IMR-90 (cell line): ENCODE measurements at regions of chr11 and their contacts with region 1.

Region 1: DNA sequence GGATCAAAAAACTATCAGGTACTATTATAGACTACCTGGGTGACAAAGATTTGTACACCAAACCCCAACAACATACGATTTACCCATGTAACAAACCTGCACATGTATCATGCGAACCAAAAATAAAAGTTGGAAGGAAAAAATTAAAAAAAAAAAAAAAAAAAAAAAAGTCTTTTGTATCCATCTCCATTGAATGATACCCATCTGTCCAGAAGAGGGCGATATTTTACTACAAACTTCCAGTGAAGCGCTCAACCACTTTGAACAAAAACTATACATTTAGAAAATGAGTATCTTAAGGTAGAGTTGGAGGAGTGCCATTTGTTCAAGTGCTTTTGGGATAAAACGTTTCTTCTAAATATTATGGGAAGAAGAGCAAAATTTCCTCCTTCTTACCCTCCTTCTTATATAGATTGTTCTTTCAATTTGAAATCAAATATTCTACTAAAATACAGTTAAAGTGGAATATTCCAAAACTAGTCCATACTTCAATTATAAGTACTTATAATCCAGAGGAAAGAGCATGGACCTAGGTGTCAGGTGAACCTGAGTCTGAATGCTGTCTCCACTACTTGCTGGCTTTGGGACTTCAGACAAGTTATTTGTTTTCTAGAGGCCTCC is 23.3 kb downstream of the ARL14EP start:
- DNase-seq: peak; percentile 62
- ATAC-seq: peak; percentile 63
- H3K4me3 ChIP-seq: no peak overlapping the region
- H3K27ac ChIP-seq: no peak overlapping the region
- H3K4me1 ChIP-seq: no peaks in the 10 kb centered on the region
- H3K27me3 ChIP-seq: peaks cover 2% of the 10 kb centered on the region; the same call in 1 of the 2 replicates
- CTCF ChIP-seq: peak; percentile 76
- POLR2A ChIP-seq: no peak
- RAD21 ChIP-seq: peak; percentile 68

Region 2: GRCh38 chr11:30653606-30654005 is 307.4 kb after region 1 on chr11:
- CTCF ChIA-PET with region 1: no interaction called
- POLR2A ChIA-PET with region 1: no interaction called
- dilution Hi-C with region 1: no loop called
- in situ Hi-C with region 1: no loop called
- intact Hi-C with region 1: loop called (anchors 2 kb)
- DNase-seq: no peak
- ATAC-seq: no peak
- H3K4me3 ChIP-seq: no peak overlapping the region
- H3K27ac ChIP-seq: no peak overlapping the region
- H3K4me1 ChIP-seq: no peaks in the 10 kb centered on the region
- H3K27me3 ChIP-seq: no peaks in the 10 kb centered on the region
- CTCF ChIP-seq: no peak
- POLR2A ChIP-seq: no peak
- RAD21 ChIP-seq: no peak

Region 3: GRCh38 chr11:30855383-30856006 is 509.3 kb after region 1 on chr11:
- CTCF ChIA-PET with region 1: interaction called, 6 read pairs
- POLR2A ChIA-PET with region 1: interaction called, 3 read pairs
- dilution Hi-C with region 1: no loop called
- in situ Hi-C with region 1: no loop called
- intact Hi-C with region 1: loop called (anchors 1 kb)
- DNase-seq: peak; percentile 29
- ATAC-seq: peak; percentile 56
- H3K4me3 ChIP-seq: no peak overlapping the region
- H3K27ac ChIP-seq: no peak overlapping the region
- H3K4me1 ChIP-seq: no peaks in the 10 kb centered on the region
- H3K27me3 ChIP-seq: no peaks in the 10 kb centered on the region
- CTCF ChIP-seq: peak; percentile 48
- POLR2A ChIP-seq: no peak
- RAD21 ChIP-seq: peak; percentile 56

Region 4: DNA sequence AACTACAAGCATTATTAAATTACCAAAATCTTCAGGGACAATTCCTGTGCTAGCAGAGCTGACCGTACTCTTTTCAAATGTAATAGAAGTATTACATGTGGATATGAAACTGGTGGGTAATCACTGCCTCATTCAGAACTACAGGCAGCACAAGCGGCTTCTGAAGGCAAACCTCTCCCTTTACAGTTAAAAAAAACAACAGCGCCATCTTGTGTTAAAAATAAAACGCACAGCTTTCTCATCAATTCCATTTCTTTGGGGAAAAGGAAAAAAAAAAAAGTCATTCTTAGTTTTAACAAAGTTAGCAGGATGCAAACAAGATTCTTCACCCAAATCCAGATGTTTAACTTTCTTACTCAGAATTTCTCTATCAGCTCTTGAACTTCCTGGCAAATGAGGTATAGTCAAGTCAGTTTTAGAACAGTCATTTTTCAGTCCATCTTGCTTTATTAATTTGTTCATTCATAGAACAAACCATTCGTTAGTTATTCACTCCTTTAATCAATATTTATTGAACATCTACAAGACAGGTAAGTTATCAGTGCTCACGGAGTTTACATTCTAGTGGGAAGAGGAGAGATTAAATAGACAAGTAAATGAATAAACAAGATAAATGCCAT is 571.8 kb after region 1 on chr11:
- CTCF ChIA-PET with region 1: interaction called, 4 read pairs
- POLR2A ChIA-PET with region 1: no interaction called
- dilution Hi-C with region 1: no loop called
- in situ Hi-C with region 1: loop called (anchors 10 kb)
- intact Hi-C with region 1: loop called (anchors 1 kb)
- DNase-seq: peak; percentile 42
- ATAC-seq: peak; percentile 56; the same call in 1 of the 2 replicates
- H3K4me3 ChIP-seq: no peak overlapping the region
- H3K27ac ChIP-seq: no peak overlapping the region
- H3K4me1 ChIP-seq: no peaks in the 10 kb centered on the region
- H3K27me3 ChIP-seq: no peaks in the 10 kb centered on the region
- CTCF ChIP-seq: peak; percentile 71
- POLR2A ChIP-seq: no peak
- RAD21 ChIP-seq: peak; percentile 60